Posterior vena cava (tissue), 2 donors: ENCODE measurements at regions of chr6 and their contacts with region 1.

Region 1: DNA sequence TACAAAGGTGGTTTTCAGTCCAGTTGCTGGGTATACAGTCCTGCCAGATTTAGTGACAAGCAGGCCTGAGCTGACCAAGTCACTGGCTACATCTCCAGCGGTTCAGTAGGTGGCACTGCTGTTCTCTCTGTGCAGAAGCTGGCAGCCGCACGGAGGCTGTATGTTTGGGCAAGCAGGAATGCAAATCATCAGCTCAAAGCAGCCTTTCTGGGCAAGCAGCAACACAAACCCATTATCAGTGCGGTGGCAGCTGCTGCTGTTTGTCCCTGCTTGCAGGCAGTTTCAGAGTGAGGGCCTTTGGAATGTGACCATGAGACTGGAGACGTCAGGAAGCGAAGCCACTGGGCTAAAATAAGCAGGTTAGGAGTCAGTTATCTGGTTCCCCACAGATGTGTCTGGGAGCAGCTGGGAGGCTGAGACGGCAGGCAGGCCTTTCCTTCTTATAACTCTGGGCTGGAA is 72.5 kb downstream of the TXLNB start:
- DNase-seq: peak; percentile 95

Region 2: DNA sequence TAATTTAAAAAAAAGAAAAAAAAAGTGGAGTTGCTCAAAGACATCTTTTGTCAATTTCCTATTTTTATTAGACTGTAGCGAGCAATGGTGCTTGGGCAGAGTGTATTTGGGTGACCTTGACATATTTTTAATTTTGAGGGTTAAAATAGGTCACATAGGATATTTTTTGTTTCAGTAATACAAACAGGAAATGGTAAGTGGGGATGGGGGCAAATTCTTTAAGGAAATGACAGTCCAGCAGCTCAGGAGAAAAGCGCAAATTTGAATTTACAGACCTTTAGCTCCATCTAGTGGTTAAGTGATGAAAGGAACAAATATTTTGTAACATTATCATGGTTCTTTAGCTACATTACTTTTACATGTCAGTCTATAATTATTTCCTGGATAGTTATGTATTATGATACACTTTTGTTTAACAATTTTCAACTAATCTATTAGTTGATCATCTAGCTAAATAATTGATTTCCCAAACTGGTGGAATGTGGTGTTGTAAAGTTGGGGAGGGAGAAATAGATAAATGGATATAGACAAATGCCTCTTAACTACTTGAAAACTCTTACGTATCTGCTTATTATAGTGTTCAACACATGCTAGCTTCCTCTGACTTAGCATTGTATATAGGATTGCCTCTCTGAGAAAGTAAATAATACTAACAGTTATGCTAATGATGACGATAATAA is 145.1 kb after region 1 on chr6:
- intact Hi-C with region 1: loop called in 1 of 2 experiments (anchors 2 kb)
- DNase-seq: no peak